Ovary (tissue), 10 donors: ENCODE measurements at regions of chr3 and their contacts with region 1.

Region 1: GRCh38 chr3:9067352-9067975 is 104.2 kb upstream of the RAD18 start:
- DNase-seq: peak; percentile 51 to 71 (median 57)
- H3K4me3 ChIP-seq: no peak overlapping the region
- H3K27ac ChIP-seq: peak overlapping the region in 1 of 2 donors; percentile 47
- H3K4me1 ChIP-seq: peaks cover 6% of the 10 kb centered on the region
- H3K27me3 ChIP-seq: no peaks in the 10 kb centered on the region
- CTCF ChIP-seq: peak; percentile 80 to 94 (median 89)
- EP300 ChIP-seq: no peak
- POLR2A ChIP-seq: no peak

Region 2: GRCh38 chr3:8970971-8971589 is 96.4 kb before region 1 on chr3:
- intact Hi-C with region 1: loop called in 2 of 4 experiments (anchors 5 kb)
- DNase-seq: peak; percentile 48 to 76 (median 70)
- H3K4me3 ChIP-seq: no peak overlapping the region
- H3K27ac ChIP-seq: no peak overlapping the region
- H3K4me1 ChIP-seq: no peaks in the 10 kb centered on the region
- H3K27me3 ChIP-seq: no peaks in the 10 kb centered on the region
- CTCF ChIP-seq: peak; percentile 90 to 96 (median 95)
- EP300 ChIP-seq: no peak
- POLR2A ChIP-seq: no peak

Region 3: GRCh38 chr3:8987645-8988383 is 79.7 kb before region 1 on chr3:
- intact Hi-C with region 1: loop called in 3 of 4 experiments (anchors 2 to 5 kb)
- DNase-seq: peak; percentile 47 to 79 (median 69)
- H3K4me3 ChIP-seq: no peak overlapping the region
- H3K27ac ChIP-seq: no peak overlapping the region
- H3K4me1 ChIP-seq: no peaks in the 10 kb centered on the region
- H3K27me3 ChIP-seq: no peaks in the 10 kb centered on the region
- CTCF ChIP-seq: peak; percentile 38 to 48 (median 41)
- EP300 ChIP-seq: no peak
- POLR2A ChIP-seq: no peak